Pancreas (tissue), 10 donors: ENCODE measurements at regions of chr6 and their contacts with region 1.

Region 1: DNA sequence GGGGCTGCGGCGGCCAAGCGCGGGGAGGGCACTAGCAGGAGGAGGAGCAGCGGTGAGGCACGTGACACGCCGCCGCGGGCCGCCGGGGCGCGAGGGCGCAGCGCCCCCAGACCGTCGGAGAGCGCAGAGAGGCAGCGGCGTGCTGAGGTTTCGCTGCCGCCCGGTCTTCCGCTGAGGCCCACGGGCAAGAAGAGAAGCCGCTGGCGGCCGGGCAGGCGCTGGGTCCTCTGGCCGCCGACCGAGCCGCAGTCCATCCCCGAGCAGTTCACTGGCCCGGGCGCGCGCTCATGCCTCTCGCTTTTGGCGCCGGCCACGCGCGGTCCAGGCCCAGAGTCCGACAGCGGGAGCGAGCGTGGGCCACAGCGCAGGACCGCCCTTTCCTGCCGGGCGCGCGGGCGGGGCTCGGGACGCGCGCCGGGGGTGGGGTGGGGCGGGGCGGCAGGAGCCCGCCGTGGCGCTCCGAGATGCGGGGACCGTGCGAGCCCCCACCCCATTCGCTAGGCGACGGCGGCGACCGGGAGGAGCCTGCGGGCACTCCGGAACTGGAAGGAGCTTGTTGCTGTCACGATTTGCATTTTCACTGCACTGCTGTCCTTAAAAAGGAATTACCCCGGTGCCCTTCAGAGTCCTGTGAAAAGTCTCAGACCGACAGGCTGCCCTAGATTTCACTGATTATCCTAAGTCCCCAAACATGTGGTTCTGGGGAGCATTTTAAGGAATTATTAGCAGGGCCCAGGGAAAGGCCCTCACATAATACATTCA is at the start of gene MCUR1:
- DNase-seq: peak; percentile 91 to 96 (median 92)
- ATAC-seq: peak; percentile 88 to 93 (median 89)
- H3K4me3 ChIP-seq: peak within 1 kb of the TSS; percentile 53 to 94 (median 86)
- H3K27ac ChIP-seq: peak within 1 kb of the TSS; percentile 82 to 95 (median 90)
- H3K4me1 ChIP-seq: peaks cover 0 to 29% (median 10%) of the 10 kb centered on the region in 3 donors
- H3K27me3 ChIP-seq: no peaks in the 10 kb centered on the region
- CTCF ChIP-seq: no peak
- total RNA-seq, gene MCUR1: 10.7 to 14.5 (median 11.9) TPM

Region 2: DNA sequence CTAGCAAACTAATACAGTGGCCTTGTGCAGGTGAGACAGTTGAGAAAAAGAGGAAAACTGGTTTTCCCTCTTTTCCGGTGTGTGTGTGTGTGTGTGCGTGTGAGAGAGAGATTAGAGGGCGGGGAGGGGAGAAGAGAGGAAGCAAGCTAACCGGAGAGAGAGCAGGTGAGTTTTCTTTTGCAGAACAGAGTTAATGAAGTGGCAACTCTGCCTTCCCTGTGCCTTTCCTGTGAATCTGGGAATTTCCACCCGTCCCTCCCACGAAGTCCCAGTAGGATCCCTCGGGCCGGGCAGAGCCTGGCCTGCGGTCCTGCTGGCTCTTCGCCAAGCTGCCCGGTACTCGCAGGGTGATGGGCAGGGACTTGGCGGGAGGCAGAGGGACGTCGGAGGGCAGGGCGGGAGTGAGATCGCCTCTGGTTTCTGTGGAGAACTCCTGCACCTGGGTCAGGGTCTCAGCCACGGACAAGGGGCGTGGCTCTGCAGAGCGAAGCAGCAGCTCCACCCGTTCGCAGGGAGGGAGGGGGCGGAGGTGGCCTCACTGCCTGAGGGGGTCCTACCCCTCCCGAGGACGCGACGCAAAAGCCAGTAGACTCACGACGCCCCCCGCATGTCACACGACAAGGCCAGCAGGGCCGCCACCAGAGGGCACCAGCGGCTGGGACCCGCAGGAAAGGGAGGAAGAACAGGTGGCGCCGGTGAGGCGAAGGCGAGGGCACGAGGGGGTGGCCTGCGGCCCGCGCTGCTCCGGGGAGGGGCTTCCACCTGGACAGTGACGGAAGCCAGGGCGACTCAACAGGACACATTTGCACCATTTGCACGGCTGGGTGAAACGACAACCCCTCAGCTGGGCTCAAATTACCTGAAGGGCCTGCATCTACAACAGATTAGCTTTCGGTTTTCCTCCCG is 59.2 kb after region 1 on chr6:
- intact Hi-C with region 1: loop called in 1 of 3 experiments (anchors 10 kb)
- DNase-seq: peak; percentile 66 to 91 (median 81)
- ATAC-seq: peak; percentile 82 to 94 (median 92)
- H3K4me3 ChIP-seq: peak overlapping the region; percentile 18 to 58 (median 44)
- H3K27ac ChIP-seq: peak overlapping the region; percentile 53 to 86 (median 71)
- H3K4me1 ChIP-seq: peaks cover 0 to 3% (median 0%) of the 10 kb centered on the region in 3 donors
- H3K27me3 ChIP-seq: no peaks in the 10 kb centered on the region
- CTCF ChIP-seq: peak in 3 of 4 donors; percentile 38 to 63 (median 61)

Region 3: DNA sequence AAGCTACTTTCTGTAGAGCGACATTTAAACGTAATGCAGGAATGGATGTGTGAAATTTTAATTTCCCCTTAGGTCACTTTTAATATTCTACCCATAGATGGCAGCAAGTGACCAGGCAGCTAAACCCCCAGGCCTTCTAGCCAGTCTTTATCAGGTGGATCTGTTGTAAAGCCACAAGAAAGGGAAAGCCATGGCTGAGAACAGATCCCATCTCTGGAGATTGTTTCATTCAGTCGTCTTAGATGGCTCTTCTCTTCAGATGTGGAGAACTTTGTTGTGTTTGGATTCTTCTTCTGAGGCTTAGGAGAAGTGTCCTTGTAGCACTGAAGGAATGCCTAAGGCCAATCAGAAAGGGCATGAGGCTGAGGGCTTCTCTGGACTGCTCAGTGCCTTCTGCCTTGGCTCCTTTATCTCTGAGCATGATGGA is 94.6 kb after region 1 on chr6:
- intact Hi-C with region 1: no loop called
- DNase-seq: peak in 4 of 6 donors; percentile 14 to 44 (median 29)
- ATAC-seq: peak; percentile 58 to 94 (median 92)
- H3K4me3 ChIP-seq: no peak overlapping the region
- H3K27ac ChIP-seq: no peak overlapping the region
- H3K4me1 ChIP-seq: no peaks in the 10 kb centered on the region
- H3K27me3 ChIP-seq: peaks cover 0 to 5% (median 2%) of the 10 kb centered on the region in 4 donors
- CTCF ChIP-seq: peak; percentile 30 to 60 (median 60)